ENCODE measurements at regions of chr10 and their contacts with region 1.

Region 1: DNA sequence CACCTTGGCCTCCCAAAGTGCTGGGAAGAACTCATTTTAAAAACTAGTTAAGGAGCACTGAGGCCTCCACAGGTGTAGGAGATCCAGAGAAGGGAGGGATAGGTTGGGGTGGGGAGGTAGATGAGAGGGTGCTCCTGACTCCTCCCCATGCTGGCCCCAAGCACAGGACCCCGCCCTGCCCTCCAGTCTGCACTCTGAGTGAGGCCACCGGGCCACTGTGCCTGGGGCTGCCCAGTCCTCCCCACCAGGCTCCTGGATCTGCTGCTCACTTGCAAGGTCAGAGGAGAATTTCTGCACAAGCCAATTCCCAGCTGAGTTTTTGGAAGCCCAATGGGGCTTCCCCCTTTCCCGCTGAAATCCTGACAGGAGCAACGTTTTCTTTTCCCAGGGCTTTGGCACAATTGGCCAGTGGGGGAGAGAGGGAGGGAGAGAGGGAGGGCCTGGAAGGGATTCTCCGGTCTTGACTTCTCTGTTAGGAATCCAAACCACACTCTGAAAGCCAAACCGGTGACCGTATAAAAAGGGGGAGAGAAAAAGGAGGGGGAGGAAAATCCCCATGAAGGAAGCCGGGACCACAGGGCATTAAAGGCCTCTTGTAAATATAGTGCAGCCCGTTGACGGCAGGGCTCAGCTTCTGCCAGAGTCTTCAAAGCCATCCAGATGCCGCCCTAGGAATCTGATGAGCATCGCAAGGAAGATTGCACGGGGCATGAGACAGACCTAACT is 116.2 kb downstream of the SH3PXD2A start:
- DNase-seq: no peak
- H3K4me3 ChIP-seq: no peak overlapping the region
- H3K27ac ChIP-seq: no peak overlapping the region
- H3K4me1 ChIP-seq: peaks cover 13% of the 10 kb centered on the region
- H3K27me3 ChIP-seq: no peaks in the 10 kb centered on the region
- CTCF ChIP-seq: no peak

Region 2: GRCh38 chr10:104245066-104245632 is 505.9 kb after region 1 on chr10:
- CTCF ChIA-PET with region 1: no interaction called
- POLR2A ChIA-PET with region 1: interaction called, 12 read pairs
- intact Hi-C with region 1: no loop called
- DNase-seq: no peak
- H3K4me3 ChIP-seq: no peak overlapping the region
- H3K27ac ChIP-seq: no peak overlapping the region
- H3K4me1 ChIP-seq: no peaks in the 10 kb centered on the region
- H3K27me3 ChIP-seq: peaks cover 22% of the 10 kb centered on the region
- CTCF ChIP-seq: no peak

Measured in A673 (cell line).